Activated T-helper 2 cell treated with anti-CD3 and anti-CD28 coated beads, Interferon-gamma antibody, Interleukin-2, Interleukin-4, amounts not matched to agents 10 μg/mL and 5 μg/mL and 100 μg/mL, durations not matched to agents 14 hours and 24 hours and 36 hours (primary cell): ENCODE measurements at regions of chr17 and their contacts with region 1.

Region 1: DNA sequence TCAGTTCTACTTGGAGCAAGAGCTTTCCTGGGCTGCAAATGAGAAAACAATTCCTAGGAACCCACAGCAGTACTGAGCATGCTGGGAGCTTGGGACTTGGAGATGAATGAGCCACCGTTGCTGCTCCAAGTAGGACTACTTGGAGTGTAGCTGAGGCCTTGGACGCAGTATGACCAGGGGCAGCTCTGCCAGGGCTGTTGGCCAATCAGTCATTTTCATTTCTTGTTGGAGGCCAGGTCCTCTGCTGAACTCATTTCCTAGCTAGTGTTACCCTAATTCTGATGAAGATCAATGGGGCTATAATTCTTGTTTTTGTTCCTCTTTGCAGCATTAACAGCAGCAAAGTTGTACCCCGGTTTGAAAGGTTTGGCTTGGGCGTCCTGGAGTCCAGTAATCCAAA is 8.0 kb upstream of the LGALS9 start:
- DNase-seq: no peak
- H3K4me3 Mint-ChIP-seq: no peak overlapping the region
- H3K27ac Mint-ChIP-seq: no peak overlapping the region
- H3K4me1 Mint-ChIP-seq: peaks cover 16% of the 10 kb centered on the region
- H3K27me3 Mint-ChIP-seq: no peaks in the 10 kb centered on the region

Region 2: DNA sequence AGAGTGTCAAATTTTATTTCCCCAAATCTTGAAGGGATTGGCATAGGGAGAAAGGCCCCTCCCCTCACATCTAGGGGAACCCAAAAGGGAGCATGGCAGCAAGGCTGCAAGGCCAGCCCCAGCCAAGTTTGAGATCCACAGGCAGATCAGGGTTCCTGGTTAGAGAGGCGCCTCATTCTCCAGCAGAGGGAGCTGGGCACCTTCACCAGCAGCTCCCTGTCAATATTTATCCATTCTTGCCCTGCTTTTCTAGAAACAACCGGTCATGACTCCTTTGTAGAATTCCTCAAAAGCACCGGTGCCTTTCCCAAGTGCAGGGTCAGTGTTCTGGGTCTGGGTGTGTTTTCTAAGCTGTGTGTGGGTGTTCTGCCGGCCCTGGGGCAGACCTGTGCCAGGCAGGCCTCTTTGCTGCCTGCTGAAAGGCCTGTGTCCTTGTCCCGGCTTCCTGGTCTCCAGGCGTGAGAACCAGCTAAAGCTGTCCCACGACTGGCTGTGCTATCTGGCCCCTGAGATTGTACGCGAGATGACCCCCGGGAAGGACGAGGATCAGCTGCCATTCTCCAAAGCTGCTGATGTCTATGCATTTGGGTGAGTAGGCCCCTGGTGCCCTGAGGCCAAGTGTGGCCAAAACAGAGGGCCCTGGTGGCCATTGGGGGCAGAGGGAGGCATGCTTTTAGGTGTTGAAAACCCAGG is 13.2 kb before region 1 on chr17:
- intact Hi-C with region 1: no loop called
- DNase-seq: no peak
- H3K4me3 Mint-ChIP-seq: no peak overlapping the region
- H3K27ac Mint-ChIP-seq: no peak overlapping the region
- H3K4me1 Mint-ChIP-seq: peaks cover 24% of the 10 kb centered on the region
- H3K27me3 Mint-ChIP-seq: no peaks in the 10 kb centered on the region

Region 3: DNA sequence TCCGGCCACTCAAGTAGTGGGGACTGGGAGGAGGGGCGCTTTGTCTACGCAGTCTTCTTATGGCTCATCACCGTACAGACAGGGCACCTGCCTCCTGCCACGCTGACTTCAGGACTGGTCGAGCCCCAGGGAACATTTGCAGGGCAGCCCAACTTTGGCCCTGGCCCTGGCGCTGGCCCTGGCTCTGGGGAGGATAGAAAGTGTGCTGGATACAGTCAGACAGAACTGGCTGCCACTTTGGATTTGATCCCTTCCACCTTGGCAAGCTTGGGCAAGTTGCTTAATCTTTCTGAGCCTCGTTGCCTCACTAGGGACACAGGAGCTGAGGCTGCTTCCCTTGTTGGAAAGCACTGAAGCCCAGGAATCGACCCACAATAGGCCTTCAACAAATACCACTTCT is 21.6 kb after region 1 on chr17:
- intact Hi-C with region 1: no loop called
- DNase-seq: no peak
- H3K4me3 Mint-ChIP-seq: no peak overlapping the region
- H3K27ac Mint-ChIP-seq: no peak overlapping the region
- H3K4me1 Mint-ChIP-seq: no peaks in the 10 kb centered on the region
- H3K27me3 Mint-ChIP-seq: no peaks in the 10 kb centered on the region

Region 4: DNA sequence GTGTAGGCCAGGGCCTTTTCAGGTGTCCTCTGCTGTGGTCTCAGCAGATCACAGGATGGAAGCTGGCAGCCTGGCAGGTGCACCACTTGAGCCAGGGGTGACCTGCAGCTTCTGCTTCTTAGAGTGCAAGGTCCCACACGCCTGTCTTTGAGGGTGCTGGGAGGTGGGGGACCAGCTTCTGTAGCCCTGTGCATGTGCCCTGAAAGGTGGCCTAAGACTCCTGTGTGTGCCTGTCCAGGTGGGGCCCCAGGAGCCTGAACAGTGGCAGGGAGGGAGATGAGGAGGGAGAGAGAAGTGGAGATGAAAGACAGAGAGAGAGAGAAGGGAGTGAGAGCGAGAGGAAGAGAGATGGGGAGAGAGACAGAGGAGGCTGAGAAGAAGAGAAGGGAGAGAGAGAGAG is 54.2 kb after region 1 on chr17:
- intact Hi-C with region 1: loop called (anchors 10 kb)
- DNase-seq: no peak
- H3K4me3 Mint-ChIP-seq: no peak overlapping the region
- H3K27ac Mint-ChIP-seq: no peak overlapping the region
- H3K4me1 Mint-ChIP-seq: no peaks in the 10 kb centered on the region
- H3K27me3 Mint-ChIP-seq: peaks cover 7% of the 10 kb centered on the region